ENCODE measurements at regions of chr13 and their contacts with region 1.

Region 1: DNA sequence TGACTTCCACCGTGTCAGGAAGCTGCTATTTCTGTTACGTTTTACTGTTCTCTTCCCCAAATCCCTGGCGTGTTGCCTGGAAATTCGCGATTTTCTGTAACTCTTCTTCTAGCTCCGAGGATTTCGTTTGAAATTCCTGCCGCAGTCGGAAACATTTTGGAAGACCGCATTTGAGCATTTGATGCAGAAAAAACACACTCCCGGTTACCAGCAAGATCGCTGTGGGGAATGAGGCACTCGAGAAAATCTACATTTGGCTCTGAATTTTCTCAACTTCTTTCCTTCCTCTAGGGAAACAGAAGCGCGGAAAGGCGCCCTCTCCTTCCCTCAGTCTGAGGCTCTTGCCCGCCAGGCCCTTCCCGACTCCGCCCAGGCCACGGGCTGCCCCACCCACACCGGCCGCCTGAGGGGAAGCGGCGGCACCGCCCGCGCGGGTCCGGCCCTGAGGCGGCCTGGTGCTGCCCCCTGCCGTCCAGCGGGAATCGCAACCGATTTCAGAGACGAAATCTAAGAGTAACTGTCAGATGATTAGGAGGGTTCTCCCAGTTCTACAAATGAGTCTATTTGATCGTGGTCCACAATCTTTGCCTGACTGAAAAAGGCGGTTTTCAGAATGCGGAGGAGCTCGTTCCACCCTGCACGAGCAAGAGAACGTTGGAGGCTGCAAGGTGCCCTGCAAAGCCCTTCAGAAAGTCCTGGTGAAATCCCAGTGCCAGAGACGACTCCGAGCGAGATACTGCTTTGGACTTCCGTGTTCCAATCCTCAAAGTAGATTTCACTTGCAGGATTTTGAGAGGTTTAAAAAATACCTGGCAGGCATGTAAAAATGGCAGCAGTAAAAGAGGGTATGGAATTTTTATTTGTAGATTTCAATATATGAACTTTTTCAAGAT is 18.4 kb upstream of the TUBGCP3 start:
- DNase-seq: peak; percentile 74 to 83 (median 75)
- H3K4me3 ChIP-seq: peak overlapping the region; percentile 43
- H3K4me3 Mint-ChIP-seq: peak overlapping the region; percentile 73 to 85 (median 80)
- H3K27ac ChIP-seq: no peak overlapping the region
- H3K27ac Mint-ChIP-seq: peak overlapping the region in 3 of 8 donors; percentile 39 to 59 (median 56)
- H3K4me1 ChIP-seq: no peaks in the 10 kb centered on the region
- H3K4me1 Mint-ChIP-seq: peaks cover 10 to 13% (median 11%) of the 10 kb centered on the region in 3 donors
- H3K27me3 ChIP-seq: no peaks in the 10 kb centered on the region
- H3K27me3 Mint-ChIP-seq: peaks cover 8 to 34% of the 10 kb centered on the region in 2 donors

Region 2: GRCh38 chr13:112587764-112588489 is 18.4 kb before region 1 on chr13 and contains the start of gene TUBGCP3:
- CTCF ChIA-PET with region 1: interaction called, 12 read pairs
- POLR2A ChIA-PET with region 1: interaction called, 4 read pairs
- DNase-seq: peak; percentile 56 to 80 (median 71)
- H3K4me3 ChIP-seq: peak within 1 kb of the TSS; percentile 89
- H3K4me3 Mint-ChIP-seq: peak within 1 kb of the TSS; percentile 87 to 95 (median 94)
- H3K27ac ChIP-seq: peak within 1 kb of the TSS; percentile 68
- H3K27ac Mint-ChIP-seq: peak within 1 kb of the TSS; percentile 83 to 97 (median 92)
- H3K4me1 ChIP-seq: peaks cover 21% of the 10 kb centered on the region
- H3K4me1 Mint-ChIP-seq: peaks cover 31 to 47% (median 43%) of the 10 kb centered on the region in 3 donors
- H3K27me3 ChIP-seq: no peaks in the 10 kb centered on the region
- H3K27me3 Mint-ChIP-seq: no peaks in the 10 kb centered on the region
- total RNA-seq, gene TUBGCP3: 45.8 to 47.0 TPM

Region 3: DNA sequence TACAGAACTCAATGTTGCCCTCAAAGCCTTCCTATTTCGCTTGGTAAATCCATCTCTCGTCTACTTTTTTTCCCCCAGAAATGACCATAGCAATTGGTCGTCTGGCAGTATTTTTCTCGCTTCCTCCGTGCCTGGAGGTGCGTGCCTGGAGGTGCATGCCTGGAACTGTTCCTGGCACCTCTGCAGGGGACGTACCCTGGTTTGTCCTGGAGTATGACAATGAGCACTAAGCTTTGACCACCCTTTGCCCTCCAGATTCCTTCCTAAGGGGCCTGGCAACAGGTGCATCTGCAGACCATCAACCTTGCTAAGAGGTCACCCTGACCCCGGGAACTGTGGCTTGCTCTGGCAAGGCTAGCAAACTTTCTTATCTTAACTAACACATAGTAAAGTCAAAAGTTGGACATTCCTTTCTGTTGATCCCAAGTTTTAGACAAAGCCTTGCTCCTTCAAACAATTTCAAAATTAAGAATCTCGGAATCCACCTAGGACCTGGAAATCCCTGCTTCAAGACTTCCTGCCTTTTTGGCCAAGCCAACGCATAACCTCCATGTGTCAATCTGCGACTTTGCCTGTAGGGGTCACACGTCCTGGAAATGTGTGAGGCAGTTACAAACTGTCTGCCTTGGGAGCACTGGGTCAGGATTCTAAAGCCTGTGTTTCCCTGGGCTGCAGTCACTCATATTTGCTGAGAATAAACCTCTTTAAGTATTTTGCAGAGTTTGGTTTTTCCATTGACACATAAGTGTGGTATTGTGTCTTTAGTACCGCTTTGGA is 10.4 kb after region 1 on chr13:
- CTCF ChIA-PET with region 1: interaction called, 13 read pairs
- POLR2A ChIA-PET with region 1: no interaction called
- DNase-seq: no peak
- H3K4me3 ChIP-seq: no peak overlapping the region
- H3K4me3 Mint-ChIP-seq: no peak overlapping the region
- H3K27ac ChIP-seq: no peak overlapping the region
- H3K27ac Mint-ChIP-seq: no peak overlapping the region
- H3K4me1 ChIP-seq: no peaks in the 10 kb centered on the region
- H3K4me1 Mint-ChIP-seq: no peaks in the 10 kb centered on the region
- H3K27me3 ChIP-seq: peaks cover 4% of the 10 kb centered on the region
- H3K27me3 Mint-ChIP-seq: peaks cover 8 to 34% of the 10 kb centered on the region in 2 donors

Region 4: DNA sequence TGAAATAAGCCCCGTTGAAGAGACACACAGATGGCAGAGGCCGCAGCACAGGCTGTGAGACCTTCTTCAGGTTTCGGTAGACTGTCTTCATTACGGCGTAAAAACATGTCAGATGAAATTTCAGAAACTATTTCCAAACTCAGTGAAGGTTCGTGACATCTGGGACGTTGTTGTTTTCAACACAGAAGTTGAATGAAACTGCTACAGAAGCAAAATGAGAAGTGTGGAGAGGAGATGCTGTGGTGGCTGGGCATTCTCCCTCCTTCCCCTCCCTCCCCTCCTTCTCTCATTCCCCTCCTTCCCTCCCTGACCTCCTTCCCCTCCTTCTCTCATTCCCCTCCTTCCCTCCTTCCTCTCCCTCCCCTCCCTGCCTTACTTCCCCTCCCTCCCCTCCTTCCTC is 197.1 kb after region 1 on chr13:
- CTCF ChIA-PET with region 1: no interaction called
- POLR2A ChIA-PET with region 1: no interaction called
- DNase-seq: no peak
- H3K4me3 ChIP-seq: no peak overlapping the region
- H3K4me3 Mint-ChIP-seq: no peak overlapping the region
- H3K27ac ChIP-seq: no peak overlapping the region
- H3K27ac Mint-ChIP-seq: peak overlapping the region in 1 of 8 donors; percentile 65
- H3K4me1 ChIP-seq: no peaks in the 10 kb centered on the region
- H3K4me1 Mint-ChIP-seq: peaks cover 0 to 13% (median 2%) of the 10 kb centered on the region in 3 donors
- H3K27me3 ChIP-seq: no peaks in the 10 kb centered on the region
- H3K27me3 Mint-ChIP-seq: no peaks in the 10 kb centered on the region